HEK293T (cell line): ENCODE measurements at regions of chr1 and their contacts with region 1.

Region 1: DNA sequence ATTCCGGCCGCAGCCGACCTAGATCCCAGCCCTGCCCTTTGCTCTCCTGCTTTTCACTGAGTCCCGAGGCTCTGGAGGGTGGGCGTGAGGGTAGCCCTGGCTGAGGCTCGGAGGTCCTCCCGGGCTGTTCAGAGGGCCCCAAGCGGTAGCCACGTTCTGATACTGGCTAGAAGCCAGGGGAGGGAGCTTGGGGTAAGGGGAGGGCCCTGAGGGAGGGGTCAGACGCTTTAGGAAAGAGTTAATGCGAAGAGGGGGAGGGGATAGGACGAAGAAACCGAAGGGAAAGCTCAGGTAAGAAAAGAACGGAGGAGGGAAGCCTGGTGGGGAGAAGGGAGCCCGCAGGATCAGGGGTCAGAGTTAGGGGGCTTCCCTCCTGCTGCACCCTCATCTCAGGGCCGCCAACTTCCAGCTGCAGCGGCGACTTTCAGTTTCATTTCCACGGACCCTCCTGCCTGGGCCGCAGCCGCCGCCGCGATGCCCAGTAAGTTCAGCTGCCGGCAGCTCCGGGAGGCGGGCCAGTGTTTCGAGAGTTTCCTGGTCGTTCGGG is at the start of gene MOV10:
- DNase-seq: peak; percentile 74

Region 2: DNA sequence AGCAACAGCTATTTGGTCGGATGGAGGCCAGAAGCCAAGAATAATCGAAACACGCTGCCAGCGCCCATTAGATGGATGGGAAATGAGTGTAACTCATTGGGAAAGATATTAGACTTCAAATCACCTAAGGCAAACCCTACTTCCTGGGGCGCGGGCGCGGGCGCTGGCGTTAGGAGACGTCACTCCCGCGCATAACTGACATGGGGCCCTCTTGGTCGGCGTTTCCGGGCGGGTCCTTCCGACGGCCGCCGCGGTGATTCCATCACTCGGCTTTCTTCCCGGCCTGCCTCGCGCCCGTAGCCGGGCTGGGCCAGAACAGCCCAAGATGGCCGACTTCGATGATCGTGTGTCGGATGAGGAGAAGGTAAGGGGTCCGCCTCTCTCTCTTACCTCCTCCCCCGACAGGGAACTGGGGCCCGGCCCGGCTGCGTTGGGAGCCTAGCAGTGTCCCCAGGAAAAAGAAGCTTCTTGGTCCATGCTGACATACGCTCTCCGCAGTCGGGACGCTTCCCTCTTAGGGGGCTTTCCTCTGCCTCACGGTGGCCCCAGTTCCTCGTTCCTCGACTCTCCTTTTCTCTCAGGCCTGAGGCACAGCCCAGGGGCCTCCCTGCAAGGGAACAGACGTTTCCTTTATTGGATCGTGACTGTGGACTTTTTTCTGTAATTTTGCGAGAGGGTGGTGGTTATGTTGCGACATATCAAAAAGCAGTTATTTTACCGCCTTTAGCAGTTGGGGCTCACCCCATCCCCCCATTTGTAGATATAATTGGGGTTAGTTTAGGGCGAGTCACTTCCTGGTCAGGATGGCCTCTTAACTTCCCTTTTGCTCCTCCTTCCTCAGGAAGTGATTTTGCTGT is 54.8 kb before region 1 on chr1 and contains the start of gene CAPZA1:
- CTCF ChIA-PET with region 1: no interaction called
- POLR2A ChIA-PET with region 1: interaction called, 13 read pairs
- DNase-seq: peak; percentile 94

Region 3: GRCh38 chr1:112688781-112689193 is 14.3 kb after region 1 on chr1:
- CTCF ChIA-PET with region 1: interaction called, 3 read pairs
- POLR2A ChIA-PET with region 1: interaction called, 11 read pairs
- DNase-seq: no peak

Region 4: GRCh38 chr1:112698366-112699310 is 24.1 kb after region 1 on chr1:
- CTCF ChIA-PET with region 1: interaction called, 4 read pairs
- POLR2A ChIA-PET with region 1: interaction called, 67 read pairs
- DNase-seq: no peak

Region 5: DNA sequence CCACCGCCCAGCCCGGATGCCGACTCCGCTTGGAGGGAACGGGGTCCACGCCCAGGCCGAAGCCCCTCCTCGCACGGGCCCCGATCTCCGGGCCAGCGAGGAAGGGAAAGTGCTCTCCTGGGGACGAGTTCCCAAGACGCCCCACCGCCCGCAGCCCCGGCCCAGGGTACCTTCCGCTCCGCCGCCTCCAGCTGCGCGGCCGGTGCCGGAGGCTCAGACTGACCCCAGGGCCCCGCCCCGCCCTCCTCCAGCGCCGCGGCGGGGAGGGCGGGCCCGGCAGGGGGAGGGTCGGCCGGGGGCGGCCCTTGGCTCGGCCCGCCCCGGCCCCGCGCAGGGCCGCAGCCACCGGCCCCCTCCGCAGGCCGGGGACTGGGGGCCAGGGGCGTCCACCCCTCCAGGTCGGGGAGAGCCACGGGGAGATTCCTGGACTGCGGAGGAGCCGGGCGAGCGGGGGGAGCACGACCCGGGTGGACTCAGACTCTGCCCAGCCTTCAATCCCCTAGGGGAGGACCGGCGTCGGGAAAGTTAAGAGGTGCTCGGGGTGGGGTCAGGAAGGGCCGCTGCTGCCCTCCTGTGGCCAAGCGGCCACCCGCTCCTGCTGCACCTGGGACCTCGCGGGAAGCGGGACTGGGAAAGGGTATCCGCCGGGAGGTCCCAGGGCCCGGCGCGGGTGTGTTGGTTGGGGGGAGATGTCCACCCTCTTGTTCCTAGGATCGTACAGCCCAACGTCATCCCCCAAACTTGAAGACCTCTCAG is 32.6 kb after region 1 on chr1 and contains the start of gene RHOC:
- CTCF ChIA-PET with region 1: interaction called, 9 read pairs
- POLR2A ChIA-PET with region 1: interaction called, 67 read pairs
- DNase-seq: peak; percentile 90